ENCODE measurements at regions of chr20 and their contacts with region 1.

Region 1: GRCh38 chr20:568097-568652 is 24.6 kb upstream of the CSNK2A1 start:
- DNase-seq: no peak
- H3K4me3 ChIP-seq: no peak overlapping the region
- H3K27ac ChIP-seq: no peak overlapping the region
- H3K4me1 ChIP-seq: peaks cover 0 to 11% (median 9%) of the 10 kb centered on the region in 4 donors
- H3K27me3 ChIP-seq: peaks cover 68% of the 10 kb centered on the region
- CTCF ChIP-seq: no peak
- EP300 ChIP-seq: no peak
- POLR2A ChIP-seq: no peak

Region 2: DNA sequence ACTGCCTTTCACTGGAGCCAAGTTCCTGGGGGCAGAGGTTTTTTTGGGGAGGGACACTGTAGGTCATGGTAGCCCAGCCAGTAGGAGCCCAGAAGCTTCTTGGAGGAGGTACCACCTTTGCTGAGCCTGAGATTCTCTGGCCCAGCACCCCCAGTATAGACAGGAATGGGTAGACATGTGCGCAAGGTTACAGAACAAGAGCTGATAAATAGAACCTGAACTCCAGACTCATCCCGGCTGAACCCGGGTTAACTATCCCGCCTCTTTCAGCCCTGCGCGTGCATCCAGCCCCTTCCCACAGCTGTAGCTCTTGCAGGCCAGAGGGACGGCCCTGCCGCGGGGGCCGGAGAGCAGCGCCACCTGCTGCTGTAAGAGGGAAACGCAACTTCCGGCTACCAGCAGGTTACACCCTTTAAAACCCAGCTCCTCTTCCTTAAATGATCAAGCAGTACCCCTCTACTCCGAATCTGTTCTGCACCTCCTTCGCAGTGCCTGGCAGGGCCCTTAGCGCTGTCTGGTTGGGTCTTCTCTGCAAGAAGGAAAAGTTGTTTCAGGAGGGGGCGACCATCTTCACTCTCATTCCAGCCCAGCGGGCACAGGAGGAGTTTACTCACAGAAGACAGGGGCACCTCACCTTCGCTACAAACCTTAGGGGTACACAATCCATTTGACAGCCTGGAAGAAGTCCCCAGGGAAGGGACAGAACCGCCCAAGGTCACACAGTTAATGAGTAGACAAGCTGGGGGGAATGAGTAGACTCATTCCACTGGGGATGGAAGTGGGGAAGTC is 77.3 kb after region 1 on chr20:
- in situ Hi-C with region 1: loop called in 2 of 4 experiments (anchors 10 kb)
- intact Hi-C with region 1: loop called (anchors 2 kb)
- DNase-seq: peak; percentile 74
- H3K4me3 ChIP-seq: no peak overlapping the region
- H3K27ac ChIP-seq: no peak overlapping the region
- H3K4me1 ChIP-seq: peaks cover 0 to 9% (median 2%) of the 10 kb centered on the region in 4 donors
- H3K27me3 ChIP-seq: peaks cover 11% of the 10 kb centered on the region
- CTCF ChIP-seq: peak; percentile 84 to 96 (median 92)
- EP300 ChIP-seq: no peak
- POLR2A ChIP-seq: no peak

Region 3: DNA sequence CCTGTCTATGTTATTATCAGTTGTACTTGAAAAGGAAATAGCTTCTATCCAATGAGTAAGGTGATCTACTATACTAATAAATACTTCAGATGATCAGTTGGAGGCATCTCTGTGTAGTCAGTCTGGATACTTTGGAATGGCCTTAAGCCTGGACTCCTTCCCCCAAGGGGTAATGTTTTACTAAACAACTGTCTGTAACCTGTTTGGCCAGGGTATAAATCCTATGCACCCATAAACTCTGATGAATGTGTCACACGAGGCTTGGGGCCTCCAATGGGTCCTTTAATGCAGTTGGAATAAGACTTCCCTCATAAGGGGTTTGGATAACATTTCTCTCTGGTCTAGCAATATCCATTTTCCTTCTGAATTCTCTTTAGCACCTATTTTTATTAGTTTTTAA is 219.7 kb after region 1 on chr20:
- in situ Hi-C with region 1: no loop called
- intact Hi-C with region 1: no loop called
- DNase-seq: no peak
- H3K4me3 ChIP-seq: no peak overlapping the region
- H3K27ac ChIP-seq: no peak overlapping the region
- H3K4me1 ChIP-seq: no peaks in the 10 kb centered on the region
- H3K27me3 ChIP-seq: no peaks in the 10 kb centered on the region
- CTCF ChIP-seq: no peak
- EP300 ChIP-seq: no peak
- POLR2A ChIP-seq: no peak